ENCODE measurements at regions of chr2 and their contacts with region 1.

Region 1: GRCh38 chr2:102428573-102428972 is 5.6 kb downstream of the IL18RAP start:
- DNase-seq: no peak
- H3K4me3 ChIP-seq: no peak overlapping the region
- H3K27ac ChIP-seq: no peak overlapping the region
- H3K4me1 ChIP-seq: no peaks in the 10 kb centered on the region
- H3K27me3 ChIP-seq: no peaks in the 10 kb centered on the region; the same call in 1 of the 2 replicates
- CTCF ChIP-seq: no peak
- EP300 ChIP-seq: no peak
- RAD21 ChIP-seq: no peak

Region 2: GRCh38 chr2:102206666-102207341 is 221.8 kb before region 1 on chr2:
- CTCF ChIA-PET with region 1: no interaction called
- POLR2A ChIA-PET with region 1: no interaction called
- DNase-seq: no peak
- H3K4me3 ChIP-seq: no peak overlapping the region
- H3K27ac ChIP-seq: no peak overlapping the region
- H3K4me1 ChIP-seq: no peaks in the 10 kb centered on the region
- H3K27me3 ChIP-seq: no peaks in the 10 kb centered on the region
- CTCF ChIP-seq: no peak
- EP300 ChIP-seq: no peak
- RAD21 ChIP-seq: no peak

Region 3: DNA sequence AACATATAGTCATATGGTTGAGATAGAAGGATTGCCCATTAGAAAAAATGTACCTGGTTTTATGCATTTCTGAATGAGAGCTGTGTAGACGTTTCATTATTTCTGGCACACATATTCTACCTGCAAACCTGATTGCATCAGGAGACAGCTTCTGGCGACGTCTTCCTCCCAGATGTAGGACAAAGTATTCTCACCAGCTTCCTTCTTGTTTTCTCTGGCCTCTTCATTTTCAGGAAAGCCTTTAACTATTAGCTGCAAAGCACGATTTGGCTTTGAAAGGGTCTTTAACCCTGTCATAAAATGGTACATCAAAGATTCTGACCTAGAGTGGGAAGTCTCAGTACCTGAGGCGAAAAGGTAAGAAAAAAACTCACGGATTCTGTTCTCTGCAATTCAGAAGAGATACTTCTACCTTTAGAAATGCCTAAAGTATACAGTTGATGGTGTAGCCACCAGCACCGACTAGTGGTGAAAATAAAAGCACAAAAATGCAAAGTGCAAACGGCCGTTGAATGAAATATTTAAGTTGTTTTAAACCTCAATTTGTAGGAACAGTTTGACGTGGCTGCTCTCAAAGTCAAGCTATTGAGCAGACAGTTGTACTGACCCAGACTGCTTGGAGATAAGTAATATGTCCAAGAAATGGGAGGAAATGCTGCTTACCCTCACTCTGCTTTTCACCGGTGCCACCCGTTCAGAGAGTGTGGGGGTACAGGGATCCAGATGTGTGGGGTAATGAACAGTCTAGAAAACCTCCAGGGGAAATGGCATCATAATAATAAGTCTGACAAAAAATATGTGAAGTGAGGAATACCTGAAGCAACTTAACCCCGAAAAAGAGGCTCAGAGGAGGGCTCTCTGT is 14.6 kb after region 1 on chr2:
- CTCF ChIA-PET with region 1: interaction called, 11 read pairs
- POLR2A ChIA-PET with region 1: no interaction called
- DNase-seq: no peak
- H3K4me3 ChIP-seq: no peak overlapping the region; a peak in 1 of 4 replicates
- H3K27ac ChIP-seq: no peak overlapping the region
- H3K4me1 ChIP-seq: no peaks in the 10 kb centered on the region
- H3K27me3 ChIP-seq: peaks cover 33% of the 10 kb centered on the region; the same call in 1 of the 2 replicates
- CTCF ChIP-seq: peak; percentile 72
- EP300 ChIP-seq: no peak
- RAD21 ChIP-seq: peak; percentile 54

Region 4: DNA sequence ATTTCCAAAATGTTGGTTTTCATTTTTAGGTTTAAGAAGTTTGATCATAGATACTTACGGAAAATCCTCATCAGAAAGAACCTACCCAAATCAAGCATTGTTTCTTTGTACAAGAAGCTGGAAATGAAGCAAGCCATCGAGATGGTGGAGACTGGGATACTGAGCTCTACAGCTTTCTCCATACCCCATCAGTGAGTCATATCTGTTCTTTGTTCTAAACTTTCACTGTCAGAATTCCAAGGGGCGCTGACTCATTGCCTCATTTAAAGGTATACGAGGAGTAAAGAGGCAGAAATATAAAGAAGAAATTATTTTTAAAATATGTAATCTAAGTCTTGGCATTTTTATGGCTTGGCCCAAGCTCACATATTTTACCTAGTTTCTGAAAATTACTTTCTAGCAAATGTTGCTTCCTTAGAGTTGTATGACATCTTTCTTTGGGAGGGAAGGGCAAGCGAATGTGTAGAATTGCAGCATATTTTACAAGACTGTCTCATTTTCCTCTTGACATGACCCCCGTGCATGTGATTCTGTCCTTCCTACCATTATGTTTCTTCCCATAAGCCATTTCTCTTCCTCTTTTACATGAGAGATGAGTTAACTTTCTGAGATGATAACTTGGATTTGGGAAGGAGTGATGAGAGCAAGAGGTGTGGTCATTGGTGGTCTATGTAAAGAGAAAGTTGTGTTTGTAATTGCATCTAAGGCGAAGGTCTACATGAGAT is 85.7 kb after region 1 on chr2:
- CTCF ChIA-PET with region 1: no interaction called
- POLR2A ChIA-PET with region 1: no interaction called
- DNase-seq: no peak
- H3K4me3 ChIP-seq: peak overlapping the region in 1 of 2 experiments; percentile 20; a peak in 1 of 4 replicates
- H3K27ac ChIP-seq: peak overlapping the region; percentile 58 to 86; a peak in 3 of 4 replicates
- H3K4me1 ChIP-seq: peaks cover 0 to 16% of the 10 kb centered on the region in 2 experiments; a peak in 1 of 4 replicates
- H3K27me3 ChIP-seq: no peaks in the 10 kb centered on the region
- CTCF ChIP-seq: no peak
- EP300 ChIP-seq: peak in 1 of 2 experiments; percentile 69; a peak in 2 of 4 replicates
- RAD21 ChIP-seq: no peak

Region 5: GRCh38 chr2:102667072-102667471 is 238.5 kb after region 1 on chr2:
- CTCF ChIA-PET with region 1: no interaction called
- POLR2A ChIA-PET with region 1: no interaction called
- DNase-seq: no peak
- H3K4me3 ChIP-seq: no peak overlapping the region
- H3K27ac ChIP-seq: no peak overlapping the region
- H3K4me1 ChIP-seq: no peaks in the 10 kb centered on the region
- H3K27me3 ChIP-seq: peaks cover 15% of the 10 kb centered on the region; the same call in 1 of the 2 replicates
- CTCF ChIP-seq: no peak
- EP300 ChIP-seq: no peak
- RAD21 ChIP-seq: no peak